H1 (cell line): ENCODE measurements at regions of chr10 and their contacts with region 1.

Region 1: GRCh38 chr10:45442662-45443061 is 68.6 kb downstream of the ALOX5 start:
- DNase-seq: no peak
- H3K4me3 ChIP-seq: no peak overlapping the region
- H3K27ac ChIP-seq: no peak overlapping the region
- H3K4me1 ChIP-seq: no peaks in the 10 kb centered on the region
- H3K27me3 ChIP-seq: no peaks in the 10 kb centered on the region
- CTCF ChIP-seq: peak; percentile 36 to 72 (median 52)
- EP300 ChIP-seq: no peak
- POLR2A ChIP-seq: no peak
- RAD21 ChIP-seq: peak; percentile 61 to 68

Region 2: DNA sequence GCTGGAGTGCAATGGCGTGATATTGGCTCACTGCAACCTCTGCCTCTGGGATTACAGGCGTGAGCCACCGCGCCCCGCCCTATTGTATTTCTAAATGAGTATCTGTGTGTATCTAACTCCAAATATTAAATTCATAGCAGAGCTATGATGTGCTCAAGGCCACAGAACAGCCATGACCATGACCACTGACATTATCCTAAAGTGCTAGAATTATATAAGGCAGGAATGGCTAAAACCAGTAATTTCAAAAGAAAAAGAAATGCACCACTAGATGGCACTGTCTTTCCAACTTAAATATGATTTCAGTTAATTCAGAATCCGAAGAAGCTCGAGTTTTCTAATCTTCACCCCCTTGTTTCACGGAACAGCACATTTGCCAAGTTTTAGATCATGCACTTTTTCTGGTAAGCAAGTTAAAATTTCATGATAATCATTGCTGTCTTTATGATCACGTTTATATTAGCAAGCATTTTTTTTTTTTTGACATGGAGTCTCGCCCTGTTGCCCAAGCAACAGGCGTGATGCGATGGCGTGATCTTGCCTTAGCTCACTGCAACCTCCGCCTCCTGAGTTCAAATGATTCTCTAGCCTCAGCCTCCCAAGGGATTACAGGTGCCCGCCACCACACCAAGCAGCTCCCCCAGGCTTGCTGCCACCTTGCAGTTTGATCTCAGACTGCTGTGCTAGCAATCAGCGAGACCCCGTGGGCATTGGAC is 192.5 kb before region 1 on chr10:
- CTCF ChIA-PET with region 1: interaction called, 13 read pairs
- POLR2A ChIA-PET with region 1: no interaction called
- DNase-seq: peak in 1 of 2 experiments; percentile 64
- H3K4me3 ChIP-seq: peak overlapping the region; percentile 9 to 62 (median 32); a peak in 5 of 8 replicates
- H3K27ac ChIP-seq: no peak overlapping the region
- H3K4me1 ChIP-seq: no peaks in the 10 kb centered on the region
- H3K27me3 ChIP-seq: no peaks in the 10 kb centered on the region
- CTCF ChIP-seq: peak in 2 of 3 experiments; percentile 9 to 43; a peak in 2 of 4 replicates
- EP300 ChIP-seq: no peak
- POLR2A ChIP-seq: no peak
- RAD21 ChIP-seq: peak; percentile 58 to 68

Region 3: GRCh38 chr10:45487738-45488137 is 45.1 kb after region 1 on chr10:
- CTCF ChIA-PET with region 1: no interaction called
- POLR2A ChIA-PET with region 1: no interaction called
- DNase-seq: no peak
- H3K4me3 ChIP-seq: no peak overlapping the region
- H3K27ac ChIP-seq: no peak overlapping the region
- H3K4me1 ChIP-seq: no peaks in the 10 kb centered on the region
- H3K27me3 ChIP-seq: no peaks in the 10 kb centered on the region
- CTCF ChIP-seq: no peak
- EP300 ChIP-seq: no peak
- POLR2A ChIP-seq: no peak
- RAD21 ChIP-seq: no peak